Activated CD8-positive, alpha-beta memory T cell treated with anti-CD3 and anti-CD28 coated beads, Interleukin-2, amount 10 ng/mL, durations not matched to agents 7 days and 5 days (primary cell): ENCODE measurements at regions of chr9 and their contacts with region 1.

Region 1: GRCh38 chr9:69193685-69194032 is 19.6 kb downstream of the TJP2 start:
- DNase-seq: no peak
- ATAC-seq: no peak
- H3K4me3 Mint-ChIP-seq: no peak overlapping the region
- H3K27ac Mint-ChIP-seq: no peak overlapping the region
- H3K4me1 Mint-ChIP-seq: peaks cover 13% of the 10 kb centered on the region
- H3K27me3 Mint-ChIP-seq: no peaks in the 10 kb centered on the region

Region 2: GRCh38 chr9:69168709-69169217 is 24.9 kb before region 1 on chr9:
- CTCF ChIA-PET with region 1: interaction called, 20 read pairs
- DNase-seq: peak; percentile 77
- ATAC-seq: peak; percentile 77
- H3K4me3 Mint-ChIP-seq: peak overlapping the region; percentile 71
- H3K27ac Mint-ChIP-seq: peak overlapping the region; percentile 61
- H3K4me1 Mint-ChIP-seq: peaks cover 23% of the 10 kb centered on the region
- H3K27me3 Mint-ChIP-seq: peaks cover 21% of the 10 kb centered on the region

Region 3: GRCh38 chr9:69180670-69181069 is 13.0 kb before region 1 on chr9:
- CTCF ChIA-PET with region 1: interaction called, 24 read pairs
- DNase-seq: peak; percentile 86
- ATAC-seq: peak; percentile 99
- H3K4me3 Mint-ChIP-seq: peak overlapping the region; percentile 28
- H3K27ac Mint-ChIP-seq: peak overlapping the region; percentile 81
- H3K4me1 Mint-ChIP-seq: peaks cover 58% of the 10 kb centered on the region
- H3K27me3 Mint-ChIP-seq: no peaks in the 10 kb centered on the region

Region 4: DNA sequence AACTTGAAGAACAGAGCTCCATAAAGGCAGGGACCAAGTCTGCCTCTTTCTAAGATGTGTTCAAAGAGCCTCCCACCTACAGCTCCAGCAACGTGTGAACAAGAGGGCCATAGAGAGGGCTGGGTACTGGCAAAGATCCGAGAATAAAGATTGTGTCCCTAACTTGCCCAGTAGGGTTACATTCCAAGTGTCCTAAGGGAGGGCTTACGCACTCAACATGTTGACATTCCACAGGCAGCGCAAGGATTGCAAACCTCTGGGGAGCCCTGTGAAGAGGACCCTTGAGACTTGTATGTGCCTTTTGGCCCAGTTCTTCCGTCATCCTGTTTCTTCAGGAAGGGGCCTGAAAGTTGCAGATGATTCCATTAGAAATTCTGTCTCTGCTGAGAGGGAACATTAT is 83.1 kb after region 1 on chr9:
- CTCF ChIA-PET with region 1: no interaction called
- DNase-seq: no peak
- ATAC-seq: no peak
- H3K4me3 Mint-ChIP-seq: no peak overlapping the region
- H3K27ac Mint-ChIP-seq: no peak overlapping the region
- H3K4me1 Mint-ChIP-seq: peaks cover 2% of the 10 kb centered on the region
- H3K27me3 Mint-ChIP-seq: peaks cover 6% of the 10 kb centered on the region